GM12878 (cell line): ENCODE measurements at regions of chr11 and their contacts with region 1.

Region 1: DNA sequence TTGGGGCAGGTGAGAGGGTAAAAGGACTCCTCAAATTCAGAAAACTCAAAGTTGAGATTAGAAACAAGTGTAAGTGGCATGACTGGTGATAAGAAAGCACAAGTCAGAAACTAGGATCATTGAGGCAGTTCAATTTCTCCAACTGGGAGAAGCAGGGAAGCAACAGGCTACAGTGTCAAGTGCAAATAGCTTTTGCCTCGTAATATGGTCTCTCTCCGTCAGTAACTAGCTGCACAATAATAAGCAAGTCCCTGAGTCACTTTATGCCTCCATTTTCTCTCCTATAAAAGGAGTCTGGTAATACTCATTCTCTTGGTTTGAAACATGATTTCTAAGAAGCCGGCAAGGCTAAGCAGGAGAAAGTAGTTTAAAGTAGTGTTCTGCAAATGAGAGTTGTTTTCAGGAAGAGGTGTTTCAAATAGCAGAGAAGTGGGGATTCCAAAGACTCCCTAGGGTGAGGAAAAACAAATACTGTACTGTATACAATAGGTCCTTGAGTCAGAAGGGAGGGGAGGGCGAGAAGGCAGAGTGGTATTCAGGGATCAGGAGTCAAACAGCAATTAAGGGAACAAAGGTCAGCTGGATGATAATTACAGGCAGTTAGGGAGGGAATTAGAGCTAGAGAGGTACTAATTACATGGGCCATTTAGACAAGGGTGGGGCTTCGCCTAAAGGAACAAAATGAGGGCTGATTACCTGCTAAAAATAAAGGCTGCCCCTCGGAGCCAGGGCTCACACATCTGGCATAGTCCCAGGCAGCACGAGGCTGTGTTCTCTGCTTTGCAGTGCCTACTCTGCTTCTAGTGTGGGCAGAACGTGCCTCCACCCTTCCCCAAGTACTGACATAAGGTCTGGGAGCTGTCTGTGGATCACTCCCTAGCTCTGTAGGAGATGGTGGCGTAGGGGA is 96.0 kb upstream of the BDNF start:
- DNase-seq: no peak
- ATAC-seq: peak; percentile 27
- H3K4me3 ChIP-seq: no peak overlapping the region
- H3K27ac ChIP-seq: no peak overlapping the region
- H3K4me1 ChIP-seq: no peaks in the 10 kb centered on the region
- H3K27me3 ChIP-seq: no peaks in the 10 kb centered on the region
- CTCF ChIP-seq: no peak
- EP300 ChIP-seq: no peak
- POLR2A ChIP-seq: no peak
- RAD21 ChIP-seq: no peak

Region 2: DNA sequence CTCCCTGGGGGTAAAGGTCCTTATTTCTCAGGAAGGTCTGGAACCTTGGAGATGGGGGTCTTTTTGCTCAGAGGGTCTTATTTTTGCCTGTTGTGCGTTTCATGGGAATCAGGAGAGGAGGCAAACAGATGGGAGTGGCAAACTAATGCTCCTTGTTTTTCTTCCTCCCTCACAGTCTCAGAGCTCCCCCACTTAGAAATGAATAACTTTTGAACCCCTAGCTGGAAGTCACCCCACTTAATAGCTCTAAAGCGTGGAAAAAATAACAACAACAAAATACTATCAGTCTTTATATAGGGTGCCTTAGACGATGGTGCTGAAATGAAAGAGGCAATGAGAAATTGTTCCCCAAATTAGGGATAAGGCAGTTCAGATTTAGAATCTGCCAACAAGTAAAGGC is 19.2 kb before region 1 on chr11:
- CTCF ChIA-PET with region 1: no interaction called
- POLR2A ChIA-PET with region 1: no interaction called
- RAD21 ChIA-PET with region 1: no interaction called
- SMC1A ChIA-PET with region 1: no interaction called
- in situ Hi-C with region 1: no loop called
- intact Hi-C with region 1: no loop called
- DNase-seq: no peak
- ATAC-seq: no peak
- H3K4me3 ChIP-seq: no peak overlapping the region
- H3K27ac ChIP-seq: no peak overlapping the region
- H3K4me1 ChIP-seq: no peaks in the 10 kb centered on the region
- H3K27me3 ChIP-seq: no peaks in the 10 kb centered on the region
- CTCF ChIP-seq: no peak
- EP300 ChIP-seq: no peak
- POLR2A ChIP-seq: no peak
- RAD21 ChIP-seq: no peak

Region 3: GRCh38 chr11:27812341-27812740 is 16.1 kb after region 1 on chr11:
- CTCF ChIA-PET with region 1: no interaction called
- POLR2A ChIA-PET with region 1: no interaction called
- RAD21 ChIA-PET with region 1: no interaction called
- SMC1A ChIA-PET with region 1: no interaction called
- in situ Hi-C with region 1: no loop called
- intact Hi-C with region 1: no loop called
- DNase-seq: no peak
- ATAC-seq: no peak
- H3K4me3 ChIP-seq: no peak overlapping the region
- H3K27ac ChIP-seq: no peak overlapping the region
- H3K4me1 ChIP-seq: no peaks in the 10 kb centered on the region
- H3K27me3 ChIP-seq: no peaks in the 10 kb centered on the region; a peak in 1 of 4 replicates
- CTCF ChIP-seq: no peak
- EP300 ChIP-seq: no peak
- POLR2A ChIP-seq: no peak
- RAD21 ChIP-seq: no peak

Region 4: GRCh38 chr11:27830206-27830605 is 34.0 kb after region 1 on chr11:
- CTCF ChIA-PET with region 1: no interaction called
- POLR2A ChIA-PET with region 1: no interaction called
- RAD21 ChIA-PET with region 1: no interaction called
- SMC1A ChIA-PET with region 1: no interaction called
- in situ Hi-C with region 1: no loop called
- intact Hi-C with region 1: loop called (anchors 5 kb)
- DNase-seq: no peak
- ATAC-seq: no peak
- H3K4me3 ChIP-seq: no peak overlapping the region
- H3K27ac ChIP-seq: no peak overlapping the region
- H3K4me1 ChIP-seq: no peaks in the 10 kb centered on the region
- H3K27me3 ChIP-seq: no peaks in the 10 kb centered on the region
- CTCF ChIP-seq: no peak
- EP300 ChIP-seq: no peak
- POLR2A ChIP-seq: no peak
- RAD21 ChIP-seq: no peak

Region 5: DNA sequence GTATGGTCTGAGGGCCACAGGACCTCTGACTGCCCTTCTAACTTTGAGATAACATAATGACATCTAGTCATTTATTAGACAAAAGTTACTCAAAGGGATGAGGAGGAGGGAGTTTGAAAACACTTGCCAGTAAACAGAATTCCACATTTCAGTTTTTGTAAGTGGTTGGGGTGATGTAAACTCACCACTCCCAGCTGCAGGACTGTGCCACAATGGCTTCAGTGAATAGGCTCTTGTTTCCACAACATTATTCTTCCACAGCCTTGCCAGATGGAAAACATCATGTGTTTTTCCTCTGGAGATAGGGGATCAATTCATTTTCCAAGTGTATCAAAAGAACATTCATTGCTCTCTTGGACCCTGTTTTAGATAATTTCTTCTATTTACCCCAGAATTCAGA is 51.3 kb after region 1 on chr11:
- CTCF ChIA-PET with region 1: no interaction called
- POLR2A ChIA-PET with region 1: no interaction called
- RAD21 ChIA-PET with region 1: no interaction called
- SMC1A ChIA-PET with region 1: no interaction called
- in situ Hi-C with region 1: no loop called
- intact Hi-C with region 1: loop called (anchors 5 kb)
- DNase-seq: no peak
- ATAC-seq: no peak
- H3K4me3 ChIP-seq: no peak overlapping the region
- H3K27ac ChIP-seq: no peak overlapping the region
- H3K4me1 ChIP-seq: no peaks in the 10 kb centered on the region
- H3K27me3 ChIP-seq: no peaks in the 10 kb centered on the region
- CTCF ChIP-seq: no peak
- EP300 ChIP-seq: no peak
- POLR2A ChIP-seq: no peak
- RAD21 ChIP-seq: no peak